ENCODE measurements at regions of chr2 and their contacts with region 1.

Region 1: DNA sequence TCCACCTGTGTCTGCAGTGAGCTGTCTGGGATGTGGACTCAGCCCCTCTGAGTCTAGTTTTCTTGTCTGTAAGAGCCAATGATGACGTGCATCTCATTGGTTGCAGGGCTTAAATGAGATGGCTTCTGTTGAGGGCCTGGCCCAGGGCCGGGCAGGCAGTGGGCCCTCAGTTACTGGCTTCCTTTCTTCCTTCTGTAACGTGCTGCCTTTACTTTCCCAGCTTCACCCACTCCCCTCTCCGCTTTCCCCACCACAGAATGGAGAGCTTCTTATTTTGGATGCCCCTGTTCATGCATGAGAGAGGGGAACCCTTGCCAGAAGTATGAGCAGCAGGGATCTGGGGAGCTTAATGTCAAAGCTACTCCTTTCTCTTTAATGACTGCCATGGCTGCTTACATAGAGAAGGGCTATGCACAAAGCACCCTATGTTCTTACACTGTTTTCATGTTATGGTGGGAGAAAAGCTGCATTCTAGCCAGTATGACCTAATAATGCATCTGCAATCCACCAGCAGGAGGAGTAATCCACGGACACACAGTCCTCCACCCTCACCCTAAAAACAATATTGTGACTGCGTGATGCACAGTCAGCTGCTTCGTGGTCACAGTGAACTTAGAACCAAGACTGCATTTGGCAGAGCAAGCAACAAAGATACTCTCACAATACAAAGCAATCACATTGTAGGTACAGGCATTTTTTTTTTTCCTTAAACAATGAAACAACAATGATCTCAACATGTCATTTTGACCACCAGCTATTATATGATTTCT is 37.2 kb downstream of the CREG2 start:
- DNase-seq: no peak
- ATAC-seq: no peak
- H3K4me3 Mint-ChIP-seq: no peak overlapping the region
- H3K27ac Mint-ChIP-seq: peak overlapping the region; percentile 11; the same call in 1 of the 2 replicates
- H3K4me1 Mint-ChIP-seq: peaks cover 8% of the 10 kb centered on the region
- H3K27me3 Mint-ChIP-seq: no peaks in the 10 kb centered on the region; the same call in 1 of the 2 replicates
- CTCF ChIP-seq: no peak

Region 2: DNA sequence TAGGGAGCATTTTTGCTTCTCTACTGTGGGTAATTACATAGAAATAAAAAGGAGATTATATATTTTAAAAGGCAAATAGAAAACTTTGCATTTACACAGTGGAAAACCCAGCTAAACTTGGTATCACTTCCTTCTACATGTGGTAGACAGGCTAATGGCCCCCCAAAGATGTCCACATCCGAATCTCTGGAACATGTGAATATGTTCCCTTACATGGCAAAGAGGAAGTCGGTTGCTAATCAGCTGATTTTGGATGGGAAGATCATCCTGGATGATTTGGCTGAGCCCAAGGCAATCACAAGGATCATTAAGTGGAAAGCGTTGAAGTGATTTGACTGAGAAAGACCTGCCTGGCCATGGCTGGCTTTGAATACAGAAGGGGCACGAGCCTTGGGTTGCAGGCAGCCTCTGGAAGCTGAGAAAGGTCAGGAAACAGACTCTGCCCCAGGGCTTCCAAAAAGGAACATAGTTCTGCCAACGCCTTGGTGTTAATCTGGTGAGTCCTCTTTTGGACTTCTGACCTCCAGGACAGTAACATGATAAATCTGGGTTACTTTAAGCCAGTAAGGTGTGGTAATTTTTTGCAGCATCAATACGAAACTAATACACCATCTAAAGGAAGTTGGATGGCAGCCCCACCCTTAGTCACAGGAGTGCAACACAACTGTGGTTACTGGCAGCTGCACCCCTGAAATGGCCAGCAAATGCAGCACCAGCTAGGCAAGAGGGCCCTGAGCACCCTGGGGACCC is 11.2 kb after region 1 on chr2:
- CTCF ChIA-PET with region 1: interaction called, 11 read pairs
- POLR2A ChIA-PET with region 1: no interaction called
- DNase-seq: no peak
- ATAC-seq: no peak; the same call in 1 of the 2 replicates
- H3K4me3 Mint-ChIP-seq: no peak overlapping the region
- H3K27ac Mint-ChIP-seq: no peak overlapping the region
- H3K4me1 Mint-ChIP-seq: peaks cover 32% of the 10 kb centered on the region
- H3K27me3 Mint-ChIP-seq: no peaks in the 10 kb centered on the region
- CTCF ChIP-seq: no peak

Region 3: DNA sequence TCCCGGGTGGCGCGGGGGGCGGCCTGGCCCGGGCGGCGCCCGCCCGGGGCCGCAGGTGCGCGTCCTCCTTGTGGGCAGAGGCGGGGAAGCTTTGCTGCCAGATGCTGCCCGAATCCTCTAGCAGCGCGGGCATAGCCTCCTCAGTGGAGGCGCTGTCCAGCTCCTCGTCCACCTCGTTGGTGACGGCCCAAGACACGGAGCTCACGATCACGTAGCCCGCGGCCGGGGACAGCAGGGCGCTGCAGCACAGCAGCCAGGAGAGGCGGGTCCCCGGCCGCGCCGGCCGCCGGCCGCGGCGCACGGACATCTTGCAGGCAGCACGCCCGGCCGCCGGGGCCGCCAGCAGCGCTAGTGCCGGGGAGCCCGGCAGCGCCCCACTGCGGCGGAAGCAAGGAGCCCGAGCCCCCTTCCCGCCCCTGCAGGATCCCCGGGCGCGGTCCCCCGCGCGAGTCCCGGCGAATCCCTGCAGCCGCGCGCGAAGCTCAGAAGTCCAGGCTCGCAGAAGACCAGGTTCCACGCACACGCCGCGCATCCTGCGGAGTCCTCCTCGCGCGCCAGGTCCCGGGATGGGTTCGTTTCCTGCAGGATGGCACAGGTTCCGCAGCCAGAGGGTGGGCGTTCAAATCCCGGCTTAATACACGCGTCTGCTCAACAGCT is 37.2 kb after region 1 on chr2 and contains the start of gene CREG2:
- CTCF ChIA-PET with region 1: interaction called, 16 read pairs
- POLR2A ChIA-PET with region 1: no interaction called
- DNase-seq: peak; percentile 80
- ATAC-seq: peak; percentile 84
- H3K4me3 Mint-ChIP-seq: peak within 1 kb of the TSS; percentile 80
- H3K27ac Mint-ChIP-seq: no peak within 1 kb of the TSS
- H3K4me1 Mint-ChIP-seq: peaks cover 22% of the 10 kb centered on the region
- H3K27me3 Mint-ChIP-seq: peaks cover 48% of the 10 kb centered on the region
- CTCF ChIP-seq: peak; percentile 34; the same call in 1 of the 2 replicates
- total RNA-seq, gene CREG2: 1.1 to 1.7 TPM (median 1.6 TPM) in 3 replicates